Activated CD4-positive, alpha-beta T cell treated with anti-CD3 and anti-CD28 coated beads, Interleukin-2, amount 10 ng/mL, durations not matched to agents 24 days and 14 days (primary cell): ENCODE measurements at regions of chr16 and their contacts with region 1.

Region 1: DNA sequence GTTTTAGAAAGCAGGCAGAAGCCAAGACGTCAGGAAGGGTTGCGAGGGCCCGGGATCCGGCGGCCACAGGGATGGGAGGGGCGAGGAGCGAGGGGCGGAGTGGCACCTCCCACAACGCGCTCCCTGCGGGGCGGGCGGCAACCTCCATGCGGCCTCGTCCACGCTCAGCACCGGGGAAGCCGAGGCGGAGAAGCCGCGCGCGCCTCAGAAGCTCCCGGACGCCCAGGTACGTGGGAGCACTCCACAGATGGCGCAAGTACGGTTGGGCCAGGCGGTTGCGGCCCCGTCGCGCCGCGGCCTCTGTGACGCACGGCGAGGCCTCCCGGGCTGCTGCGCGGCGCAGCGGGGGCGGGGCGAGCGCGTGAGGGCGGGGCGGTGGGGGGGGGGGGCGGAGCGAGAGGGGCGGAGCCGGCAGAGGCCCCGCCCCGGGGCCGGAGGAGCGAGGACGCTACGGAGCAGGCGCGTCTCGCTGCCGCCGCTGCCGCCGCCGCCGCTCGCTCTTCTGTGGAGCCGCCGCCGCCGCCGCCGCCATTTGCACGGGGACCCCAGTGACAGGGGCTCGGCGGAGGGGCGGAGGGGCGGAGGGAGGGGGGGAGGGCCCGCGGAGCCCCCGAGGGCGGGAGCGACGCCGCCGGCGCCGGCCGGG is at the start of gene TENT4B:
- DNase-seq: peak; percentile 97
- H3K4me3 Mint-ChIP-seq: peak within 1 kb of the TSS; percentile 88
- H3K27ac Mint-ChIP-seq: peak within 1 kb of the TSS; percentile 94
- H3K4me1 Mint-ChIP-seq: peaks cover 30% of the 10 kb centered on the region
- H3K27me3 Mint-ChIP-seq: no peaks in the 10 kb centered on the region
- total RNA-seq, gene TENT4B: 16.6 and 18.5 TPM in 2 replicates

Region 2: GRCh38 chr16:49921791-49922456 is 231.0 kb before region 1 on chr16:
- intact Hi-C with region 1: no loop called
- DNase-seq: peak; percentile 80
- H3K4me3 Mint-ChIP-seq: no peak overlapping the region
- H3K27ac Mint-ChIP-seq: no peak overlapping the region
- H3K4me1 Mint-ChIP-seq: no peaks in the 10 kb centered on the region
- H3K27me3 Mint-ChIP-seq: peaks cover 6% of the 10 kb centered on the region

Region 3: DNA sequence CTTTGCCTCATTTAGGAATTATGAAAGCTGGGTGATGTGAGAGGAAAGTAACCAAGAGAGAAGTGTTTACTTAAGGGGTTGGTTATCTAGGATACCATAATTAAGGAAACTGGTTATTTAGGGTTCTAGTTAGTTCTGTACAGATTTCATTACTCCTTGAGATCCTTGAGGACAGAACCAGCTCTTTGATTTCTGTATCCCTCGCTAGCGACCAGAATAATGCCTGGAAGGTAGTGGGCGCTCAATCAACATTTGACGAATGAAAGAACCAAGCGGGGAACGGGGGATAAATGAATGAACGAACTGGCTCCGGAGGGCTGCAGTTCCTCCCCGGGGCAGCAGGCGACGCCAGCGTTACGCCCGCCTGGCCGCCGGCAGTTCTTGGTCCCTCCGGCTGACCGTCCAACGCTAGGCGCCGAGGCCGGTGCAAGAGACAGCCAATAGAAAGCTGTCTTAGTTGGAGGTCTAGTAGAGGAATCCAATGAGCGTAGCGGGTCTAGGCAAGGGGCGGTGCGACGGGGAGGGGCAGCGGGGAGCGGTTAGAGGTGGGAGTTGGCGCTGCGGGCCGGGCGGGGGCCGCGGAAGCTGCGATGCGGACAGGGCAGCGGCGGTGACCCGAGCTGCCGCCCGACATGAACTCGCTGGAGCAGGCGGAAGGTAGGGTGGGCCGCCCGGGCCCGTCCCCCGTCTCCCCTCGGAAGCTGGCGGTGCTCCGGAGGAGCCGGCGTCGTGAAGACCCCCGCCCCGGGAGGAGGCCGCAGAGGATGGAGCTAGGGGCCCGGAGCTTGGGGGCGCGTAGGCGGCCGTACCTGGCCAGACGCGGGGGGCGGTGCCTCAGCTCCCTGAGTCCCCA is 128.0 kb before region 1 on chr16 and contains the start of gene CNEP1R1:
- intact Hi-C with region 1: loop called (anchors 1 kb)
- DNase-seq: peak; percentile 98
- H3K4me3 Mint-ChIP-seq: peak within 1 kb of the TSS; percentile 97
- H3K27ac Mint-ChIP-seq: peak within 1 kb of the TSS; percentile 88
- H3K4me1 Mint-ChIP-seq: peaks cover 17% of the 10 kb centered on the region
- H3K27me3 Mint-ChIP-seq: peaks cover 11% of the 10 kb centered on the region
- total RNA-seq, gene CNEP1R1: 22.3 and 23.0 TPM in 2 replicates

Region 4: GRCh38 chr16:50102051-50102746 is 50.7 kb before region 1 on chr16:
- intact Hi-C with region 1: loop called (anchors 5 kb)
- DNase-seq: no peak
- H3K4me3 Mint-ChIP-seq: no peak overlapping the region
- H3K27ac Mint-ChIP-seq: peak overlapping the region; percentile 76
- H3K4me1 Mint-ChIP-seq: peaks cover 9% of the 10 kb centered on the region
- H3K27me3 Mint-ChIP-seq: no peaks in the 10 kb centered on the region

Region 5: DNA sequence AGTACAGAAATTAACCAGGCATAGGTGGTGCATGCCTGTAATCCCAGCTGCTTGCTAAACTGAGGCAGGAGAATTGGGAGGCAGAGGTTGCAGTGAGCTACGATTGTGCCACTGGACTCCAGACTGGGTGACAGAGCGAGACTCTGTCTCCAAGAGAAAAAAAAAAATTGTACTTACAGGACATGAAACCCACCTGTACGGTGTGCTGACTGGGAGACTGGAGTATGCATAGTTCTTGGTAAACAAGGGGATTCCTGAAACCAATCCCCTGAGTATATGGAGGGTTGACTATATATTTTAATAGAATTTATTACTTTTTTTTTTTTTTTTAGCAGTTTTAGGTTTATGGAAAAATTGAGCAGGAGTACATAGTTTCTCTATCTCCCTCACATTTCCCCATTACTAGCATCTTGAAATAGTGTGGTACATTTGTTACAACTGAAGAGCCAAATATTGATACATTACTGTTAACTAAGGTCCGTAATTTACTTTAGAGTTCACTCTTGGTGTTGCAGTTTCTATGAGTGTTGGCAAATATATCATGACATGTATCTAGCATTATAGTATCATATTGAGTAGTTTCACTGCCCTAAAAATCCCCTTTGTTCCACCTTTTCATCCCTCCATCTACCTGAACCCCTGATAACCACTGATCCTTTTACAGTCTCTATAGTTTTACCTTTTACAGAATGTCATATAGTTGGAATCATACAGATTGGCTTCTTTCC is 19.4 kb after region 1 on chr16:
- intact Hi-C with region 1: loop called (anchors 1 kb)
- DNase-seq: no peak
- H3K4me3 Mint-ChIP-seq: no peak overlapping the region
- H3K27ac Mint-ChIP-seq: no peak overlapping the region
- H3K4me1 Mint-ChIP-seq: peaks cover 32% of the 10 kb centered on the region
- H3K27me3 Mint-ChIP-seq: no peaks in the 10 kb centered on the region

Region 6: GRCh38 chr16:50326949-50327402 is 174.0 kb after region 1 on chr16:
- intact Hi-C with region 1: loop called (anchors 5 kb)
- DNase-seq: peak; percentile 92
- H3K4me3 Mint-ChIP-seq: peak overlapping the region; percentile 13
- H3K27ac Mint-ChIP-seq: peak overlapping the region; percentile 61
- H3K4me1 Mint-ChIP-seq: peaks cover 40% of the 10 kb centered on the region
- H3K27me3 Mint-ChIP-seq: no peaks in the 10 kb centered on the region

Region 7: GRCh38 chr16:50616883-50617645 is 464.1 kb after region 1 on chr16:
- intact Hi-C with region 1: no loop called
- DNase-seq: no peak
- H3K4me3 Mint-ChIP-seq: no peak overlapping the region
- H3K27ac Mint-ChIP-seq: no peak overlapping the region
- H3K4me1 Mint-ChIP-seq: peaks cover 8% of the 10 kb centered on the region
- H3K27me3 Mint-ChIP-seq: no peaks in the 10 kb centered on the region

Region 8: DNA sequence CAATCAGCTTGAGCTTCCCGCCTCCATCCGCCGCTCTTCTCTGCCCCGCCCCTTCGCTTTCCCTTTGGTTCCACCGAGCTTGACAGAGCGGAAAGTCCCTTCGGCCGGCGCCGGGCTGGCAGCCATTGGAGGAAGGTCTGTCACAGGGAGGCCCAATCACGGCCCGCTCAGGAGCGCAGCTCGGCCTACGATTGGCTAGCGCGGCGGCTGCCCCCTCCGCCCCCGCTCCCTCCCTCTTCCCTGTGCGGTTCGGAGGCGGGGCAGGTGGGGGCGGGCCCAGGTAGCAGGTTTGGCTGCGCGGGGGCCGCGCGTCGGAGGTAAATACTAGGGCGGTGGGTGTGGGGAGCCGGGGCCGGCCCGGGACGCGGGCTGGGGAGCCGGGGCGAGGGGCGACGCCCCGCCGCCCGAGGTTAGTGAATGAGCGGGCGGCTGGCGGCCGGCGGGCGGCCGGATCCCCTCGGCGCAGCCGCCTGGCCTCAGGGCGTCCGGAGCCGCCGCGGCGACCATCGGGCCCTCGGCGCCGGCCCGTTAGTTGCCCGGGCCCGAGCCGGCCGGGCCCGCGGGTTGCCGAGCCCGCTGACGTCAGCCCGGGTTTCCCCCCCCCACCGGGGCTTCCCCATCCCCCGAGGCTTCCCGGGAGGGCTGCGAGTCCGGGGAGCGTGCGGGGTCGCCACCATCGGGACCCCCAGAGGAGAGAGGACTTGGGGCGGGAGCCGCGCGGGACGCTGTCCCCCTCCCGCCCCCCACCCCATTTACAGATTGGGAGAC is 589.1 kb after region 1 on chr16 and contains the start of gene CYLD:
- intact Hi-C with region 1: loop called (anchors 5 kb)
- DNase-seq: peak; percentile 100
- H3K4me3 Mint-ChIP-seq: peak within 1 kb of the TSS; percentile 95
- H3K27ac Mint-ChIP-seq: peak within 1 kb of the TSS; percentile 96
- H3K4me1 Mint-ChIP-seq: peaks cover 51% of the 10 kb centered on the region
- H3K27me3 Mint-ChIP-seq: no peaks in the 10 kb centered on the region
- total RNA-seq, gene CYLD: 178 TPM in 2 replicates